Activated B cell treated with CpG ODN at 0.5 μM for 24 hours (primary cell): ENCODE measurements at regions of chr6 and their contacts with region 1.

Region 1: DNA sequence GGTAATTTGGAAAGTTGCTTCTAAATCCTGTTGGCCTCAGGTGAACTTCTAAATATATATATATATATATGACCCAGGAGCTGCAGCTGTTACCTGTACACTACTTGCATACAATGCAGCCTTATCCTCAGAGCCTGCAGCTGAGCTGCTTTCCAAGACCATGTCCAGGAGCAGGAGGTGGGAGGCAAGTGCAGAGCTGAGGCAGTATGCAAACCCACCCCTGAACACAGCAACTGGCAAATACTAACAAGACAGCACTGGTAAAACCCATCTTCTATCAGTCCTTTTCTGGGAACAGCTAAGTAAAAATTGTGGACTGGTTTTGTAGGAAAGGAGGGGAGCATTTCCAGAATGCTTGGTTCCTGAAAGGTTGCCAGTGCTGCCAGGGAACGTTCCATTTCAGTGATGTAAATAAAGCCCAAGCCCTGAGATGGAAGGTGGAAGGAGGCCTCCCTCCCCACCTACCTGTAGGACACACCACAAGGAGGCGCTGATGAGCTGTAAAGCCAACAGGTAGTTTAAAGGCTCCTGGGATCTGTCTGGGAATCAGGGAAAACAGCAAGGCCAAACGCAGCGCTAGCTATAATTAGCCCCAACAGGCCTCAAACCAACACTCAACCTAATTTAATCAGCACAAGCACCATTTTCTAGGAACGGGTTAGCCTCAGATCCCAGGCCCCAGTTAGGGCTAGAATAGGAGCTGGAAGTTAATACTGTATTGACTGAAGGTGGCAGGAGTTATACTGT is 93.8 kb upstream of the MAP7 start:
- DNase-seq: peak; percentile 63
- ATAC-seq: peak; percentile 59
- H3K4me3 Mint-ChIP-seq: no peak overlapping the region
- H3K27ac Mint-ChIP-seq: no peak overlapping the region
- H3K4me1 Mint-ChIP-seq: peaks cover 4% of the 10 kb centered on the region
- H3K27me3 Mint-ChIP-seq: no peaks in the 10 kb centered on the region
- CTCF ChIP-seq: peak; percentile 69

Region 2: GRCh38 chr6:136655239-136656014 is 11.4 kb after region 1 on chr6:
- CTCF ChIA-PET with region 1: interaction called, 14 read pairs
- POLR2A ChIA-PET with region 1: no interaction called
- intact Hi-C with region 1: no loop called
- DNase-seq: no peak
- ATAC-seq: no peak
- H3K4me3 Mint-ChIP-seq: no peak overlapping the region
- H3K27ac Mint-ChIP-seq: no peak overlapping the region
- H3K4me1 Mint-ChIP-seq: no peaks in the 10 kb centered on the region
- H3K27me3 Mint-ChIP-seq: no peaks in the 10 kb centered on the region
- CTCF ChIP-seq: no peak

Region 3: GRCh38 chr6:136723780-136724179 is 79.8 kb after region 1 on chr6:
- CTCF ChIA-PET with region 1: interaction called, 10 read pairs
- POLR2A ChIA-PET with region 1: interaction called, 7 read pairs
- intact Hi-C with region 1: loop called (anchors 5 kb)
- DNase-seq: peak; percentile 25
- ATAC-seq: peak; percentile 89
- H3K4me3 Mint-ChIP-seq: peak overlapping the region; percentile 21
- H3K27ac Mint-ChIP-seq: peak overlapping the region; percentile 59
- H3K4me1 Mint-ChIP-seq: peaks cover 54% of the 10 kb centered on the region
- H3K27me3 Mint-ChIP-seq: no peaks in the 10 kb centered on the region
- CTCF ChIP-seq: no peak

Region 4: GRCh38 chr6:136783495-136784270 is 139.7 kb after region 1 on chr6:
- CTCF ChIA-PET with region 1: interaction called, 381 read pairs
- POLR2A ChIA-PET with region 1: interaction called, 5 read pairs
- intact Hi-C with region 1: no loop called
- DNase-seq: peak; percentile 39
- ATAC-seq: peak; percentile 95
- H3K4me3 Mint-ChIP-seq: peak overlapping the region; percentile 85
- H3K27ac Mint-ChIP-seq: peak overlapping the region; percentile 93
- H3K4me1 Mint-ChIP-seq: peaks cover 80% of the 10 kb centered on the region
- H3K27me3 Mint-ChIP-seq: no peaks in the 10 kb centered on the region
- CTCF ChIP-seq: no peak

Region 5: DNA sequence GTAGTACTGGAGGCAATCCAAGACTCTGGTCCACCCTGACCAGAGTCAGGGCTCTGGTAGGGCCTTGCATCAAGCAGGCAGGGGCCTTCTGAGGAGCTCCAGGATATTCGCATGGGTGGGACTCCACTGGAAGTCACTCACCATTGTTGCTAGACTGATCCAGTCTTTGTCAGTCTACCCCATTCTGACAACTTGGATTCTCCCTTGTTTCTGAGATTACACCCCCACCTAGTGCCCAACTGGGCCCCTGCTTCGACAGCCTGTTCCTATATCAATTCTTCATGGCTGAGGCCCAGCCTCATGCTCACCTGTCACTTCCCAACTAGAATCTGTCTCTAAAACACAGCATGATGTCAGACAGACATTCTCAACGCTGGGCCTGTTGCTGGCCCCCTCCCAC is 283.3 kb after region 1 on chr6:
- CTCF ChIA-PET with region 1: interaction called, 13 read pairs
- POLR2A ChIA-PET with region 1: no interaction called
- intact Hi-C with region 1: loop called (anchors 1 kb)
- DNase-seq: no peak
- ATAC-seq: no peak
- H3K4me3 Mint-ChIP-seq: no peak overlapping the region
- H3K27ac Mint-ChIP-seq: no peak overlapping the region
- H3K4me1 Mint-ChIP-seq: peaks cover 15% of the 10 kb centered on the region
- H3K27me3 Mint-ChIP-seq: peaks cover 21% of the 10 kb centered on the region
- CTCF ChIP-seq: no peak